Activated CD4-positive, alpha-beta T cell treated with anti-CD3 and anti-CD28 coated beads, Interleukin-2, amount 10 ng/mL, durations not matched to agents 24 days and 14 days (primary cell): ENCODE measurements at regions of chr19 and their contacts with region 1.

Region 1: DNA sequence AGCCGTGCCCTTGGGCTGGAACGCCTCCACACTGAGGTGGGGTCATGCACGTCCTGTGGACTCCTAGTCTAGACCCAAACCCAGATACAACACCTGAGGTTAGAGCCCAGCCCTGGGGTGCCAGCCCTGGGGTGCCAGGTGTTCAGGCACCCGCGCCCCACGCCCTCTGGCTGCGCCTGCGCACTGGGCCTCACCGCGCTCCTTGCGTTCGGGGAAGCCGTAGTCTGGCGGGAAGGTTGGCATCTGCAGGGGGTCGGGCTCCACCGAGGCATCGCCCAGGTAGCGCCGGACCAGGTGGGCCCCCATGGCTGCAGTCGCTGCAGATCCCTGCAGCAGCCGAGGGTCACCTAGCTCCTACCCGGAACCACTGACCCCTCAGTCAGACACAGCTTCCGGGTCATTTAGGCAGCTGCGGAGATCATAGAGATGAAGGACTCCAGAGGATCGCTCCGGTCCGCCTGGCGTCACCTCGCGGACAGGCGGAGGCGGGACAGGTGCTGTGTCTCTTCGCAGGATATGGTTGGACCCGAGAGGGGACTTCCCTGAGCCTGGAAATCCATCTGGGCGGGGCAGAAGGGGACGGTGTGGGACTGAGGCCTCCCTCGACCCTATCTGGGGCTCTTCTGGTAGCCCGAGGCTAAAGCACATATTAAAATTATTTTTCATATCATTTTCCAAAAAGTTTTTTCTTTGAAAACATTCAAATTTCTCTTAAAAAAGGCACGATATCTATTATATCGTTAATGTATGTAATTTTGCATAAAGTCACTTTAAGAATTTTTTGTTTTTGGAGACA is at the start of gene NDUFB7:
- DNase-seq: peak; percentile 97
- H3K4me3 Mint-ChIP-seq: peak within 1 kb of the TSS; percentile 91
- H3K27ac Mint-ChIP-seq: peak within 1 kb of the TSS; percentile 89
- H3K4me1 Mint-ChIP-seq: peaks cover 23% of the 10 kb centered on the region
- H3K27me3 Mint-ChIP-seq: no peaks in the 10 kb centered on the region
- total RNA-seq, gene NDUFB7: 129 and 132 TPM in 2 replicates

Region 2: DNA sequence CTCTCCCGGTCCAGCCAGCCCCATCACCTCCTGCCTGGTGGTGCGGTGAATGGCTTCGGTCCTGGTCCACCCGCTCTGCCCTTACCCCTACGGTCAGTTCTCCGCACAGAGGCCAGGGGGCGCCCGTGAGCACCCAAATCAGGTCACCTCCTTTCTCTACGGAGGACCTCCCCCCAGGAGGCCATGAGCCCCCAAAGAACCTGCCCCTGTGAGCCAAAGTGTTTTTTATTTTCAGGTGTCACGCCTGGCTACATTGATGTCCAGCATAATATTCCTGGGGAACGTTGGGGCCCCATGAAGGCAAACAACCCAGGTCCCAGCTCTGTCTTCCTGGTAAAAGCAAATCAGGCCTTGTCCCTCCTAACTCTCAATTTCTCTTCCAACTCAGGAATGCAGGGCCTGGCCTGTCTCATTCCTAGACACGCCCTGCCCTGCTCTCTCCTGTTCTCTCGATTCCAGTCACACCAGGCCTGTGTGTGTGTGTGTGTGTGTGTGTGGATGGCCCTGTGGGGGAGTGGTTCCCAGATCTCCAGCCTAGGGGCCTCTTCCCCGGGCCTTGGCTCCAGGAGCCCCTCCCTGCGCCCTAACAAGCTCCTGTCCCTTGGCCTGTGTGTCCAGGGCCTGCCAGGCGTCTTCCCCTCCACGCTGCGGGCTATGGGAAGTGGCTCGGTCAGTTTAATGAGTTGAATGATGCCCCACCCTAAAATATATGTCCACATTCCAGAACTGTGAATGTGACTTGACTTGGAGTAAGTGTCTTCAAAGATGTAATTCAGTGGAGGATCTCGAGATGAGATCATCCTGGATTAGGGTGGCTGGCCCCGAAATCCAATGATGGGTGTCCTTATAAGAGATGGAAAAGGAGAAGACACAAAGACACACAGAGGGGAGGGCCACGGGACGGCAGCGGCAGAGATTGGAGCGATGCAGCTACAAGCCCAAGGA is 66.1 kb before region 1 on chr19:
- intact Hi-C with region 1: no loop called
- DNase-seq: peak; percentile 92
- H3K4me3 Mint-ChIP-seq: peak overlapping the region; percentile 28
- H3K27ac Mint-ChIP-seq: peak overlapping the region; percentile 88
- H3K4me1 Mint-ChIP-seq: peaks cover 38% of the 10 kb centered on the region
- H3K27me3 Mint-ChIP-seq: peaks cover 8% of the 10 kb centered on the region

Region 3: GRCh38 chr19:14689598-14690503 is 118.0 kb after region 1 on chr19 and contains the start of gene ZNF333:
- intact Hi-C with region 1: loop called (anchors 1 kb)
- DNase-seq: peak; percentile 99
- H3K4me3 Mint-ChIP-seq: peak within 1 kb of the TSS; percentile 98
- H3K27ac Mint-ChIP-seq: peak within 1 kb of the TSS; percentile 99
- H3K4me1 Mint-ChIP-seq: peaks cover 14% of the 10 kb centered on the region
- H3K27me3 Mint-ChIP-seq: no peaks in the 10 kb centered on the region
- total RNA-seq, gene ZNF333: 15.0 and 15.3 TPM in 2 replicates

Region 4: DNA sequence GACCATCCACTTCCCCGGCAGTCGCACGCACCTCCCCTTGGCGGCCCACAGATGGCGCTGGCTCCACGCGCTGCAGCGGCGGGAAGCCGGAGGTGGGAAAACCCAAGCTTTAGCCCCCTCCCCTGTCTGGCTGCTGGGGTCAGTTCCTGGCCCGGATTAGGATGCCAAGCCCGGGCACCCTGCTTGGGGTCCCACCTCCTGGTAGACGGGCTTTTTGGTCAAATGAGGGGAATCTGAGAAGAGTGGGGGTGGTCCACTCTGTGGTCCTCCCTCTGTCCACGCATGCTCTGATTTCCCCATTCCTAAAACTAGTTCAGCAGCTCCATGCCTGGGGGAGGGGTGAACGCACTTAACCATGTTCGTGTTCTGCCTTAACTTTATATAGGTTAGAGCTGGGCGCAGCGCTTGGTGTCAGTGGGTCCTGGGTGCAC is 214.5 kb after region 1 on chr19:
- intact Hi-C with region 1: loop called (anchors 10 kb)
- DNase-seq: peak; percentile 67
- H3K4me3 Mint-ChIP-seq: no peak overlapping the region
- H3K27ac Mint-ChIP-seq: no peak overlapping the region
- H3K4me1 Mint-ChIP-seq: peaks cover 12% of the 10 kb centered on the region
- H3K27me3 Mint-ChIP-seq: peaks cover 5% of the 10 kb centered on the region

Region 5: GRCh38 chr19:14890643-14891379 is 318.9 kb after region 1 on chr19:
- intact Hi-C with region 1: loop called (anchors 1 kb)
- DNase-seq: no peak
- H3K4me3 Mint-ChIP-seq: no peak overlapping the region
- H3K27ac Mint-ChIP-seq: no peak overlapping the region
- H3K4me1 Mint-ChIP-seq: peaks cover 4% of the 10 kb centered on the region
- H3K27me3 Mint-ChIP-seq: peaks cover 11% of the 10 kb centered on the region